HCT116 (cell line): ENCODE measurements at regions of chr17 and their contacts with region 1.

Region 1: GRCh38 chr17:81440876-81441244 is 45.6 kb downstream of the BAHCC1 start:
- DNase-seq: no peak
- ATAC-seq: peak; percentile 83
- H3K4me3 ChIP-seq: no peak overlapping the region
- H3K27ac ChIP-seq: no peak overlapping the region
- H3K4me1 ChIP-seq: peaks cover 11 to 17% of the 10 kb centered on the region in 2 experiments
- H3K27me3 ChIP-seq: no peaks in the 10 kb centered on the region
- CTCF ChIP-seq: peak in 2 of 3 experiments; percentile 94 to 98; a peak in 4 of 6 replicates
- POLR2A ChIP-seq: no peak
- RAD21 ChIP-seq: no peak

Region 2: GRCh38 chr17:81428948-81429774 is 11.7 kb before region 1 on chr17:
- CTCF ChIA-PET with region 1: interaction called, 33 read pairs
- POLR2A ChIA-PET with region 1: interaction called, 3 read pairs
- RAD21 ChIA-PET with region 1: no interaction called
- intact Hi-C with region 1: no loop called
- DNase-seq: no peak
- ATAC-seq: peak; percentile 76
- H3K4me3 ChIP-seq: peak overlapping the region in 1 of 2 experiments; percentile 38; a peak in 1 of 4 replicates
- H3K27ac ChIP-seq: no peak overlapping the region; the same call in 1 of the 2 replicates
- H3K4me1 ChIP-seq: peaks cover 21 to 45% of the 10 kb centered on the region in 2 experiments
- H3K27me3 ChIP-seq: no peaks in the 10 kb centered on the region
- CTCF ChIP-seq: no peak
- POLR2A ChIP-seq: no peak
- RAD21 ChIP-seq: no peak

Region 3: DNA sequence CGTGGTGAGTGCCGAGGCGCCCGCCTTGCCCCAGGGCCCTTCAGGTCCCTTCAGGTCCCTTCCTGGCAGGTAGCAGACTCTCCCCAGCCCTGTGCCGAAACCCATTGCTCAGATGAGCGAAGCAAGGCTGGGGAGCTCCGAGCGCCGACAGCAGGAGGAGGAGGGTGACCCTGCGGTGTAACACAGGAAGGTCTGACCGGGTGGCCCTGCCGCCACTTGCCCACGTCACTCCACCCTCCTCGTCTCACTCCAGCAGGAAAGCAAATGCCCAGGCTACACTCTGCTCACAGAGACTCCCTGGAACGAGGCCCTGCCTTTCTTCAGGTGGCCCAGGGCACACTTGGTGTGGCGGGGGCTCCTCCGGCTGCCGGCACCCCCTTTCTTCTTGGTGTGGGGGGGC is 14.5 kb after region 1 on chr17:
- CTCF ChIA-PET with region 1: no interaction called
- POLR2A ChIA-PET with region 1: no interaction called
- RAD21 ChIA-PET with region 1: no interaction called
- intact Hi-C with region 1: no loop called
- DNase-seq: no peak
- ATAC-seq: no peak
- H3K4me3 ChIP-seq: no peak overlapping the region
- H3K27ac ChIP-seq: no peak overlapping the region; the same call in 1 of the 2 replicates
- H3K4me1 ChIP-seq: no peaks in the 10 kb centered on the region
- H3K27me3 ChIP-seq: no peaks in the 10 kb centered on the region
- CTCF ChIP-seq: no peak
- POLR2A ChIP-seq: no peak
- RAD21 ChIP-seq: no peak

Region 4: DNA sequence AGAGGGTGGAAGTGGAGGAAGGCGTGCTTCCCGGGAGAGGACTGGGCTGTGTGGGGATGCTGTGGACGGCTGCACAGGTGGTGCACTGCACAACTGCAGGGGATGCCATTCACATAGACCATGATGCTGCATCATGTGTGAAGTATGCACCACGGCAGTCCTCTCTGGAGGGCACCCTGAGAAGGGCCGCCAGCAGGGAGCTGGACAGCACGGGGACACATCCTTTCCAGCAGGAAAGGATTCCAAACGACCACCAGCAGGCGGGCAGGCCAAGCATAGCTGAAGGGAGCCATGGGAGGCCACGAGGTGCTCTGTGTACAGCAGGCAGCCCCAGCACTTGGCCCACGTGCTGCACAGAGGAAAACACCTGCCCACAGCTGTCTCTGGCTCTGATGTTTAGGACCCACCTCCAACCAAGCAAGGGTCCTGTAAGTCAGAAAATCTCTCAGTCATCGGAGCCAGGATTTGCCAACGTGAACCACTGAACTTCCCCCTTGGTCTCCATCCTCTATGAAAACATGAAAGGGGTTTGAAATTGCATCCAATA is 61.7 kb after region 1 on chr17:
- CTCF ChIA-PET with region 1: no interaction called
- POLR2A ChIA-PET with region 1: no interaction called
- RAD21 ChIA-PET with region 1: no interaction called
- intact Hi-C with region 1: no loop called
- DNase-seq: no peak
- ATAC-seq: no peak
- H3K4me3 ChIP-seq: no peak overlapping the region
- H3K27ac ChIP-seq: no peak overlapping the region
- H3K4me1 ChIP-seq: peaks cover 0 to 10% of the 10 kb centered on the region in 2 experiments; a peak in 1 of 4 replicates
- H3K27me3 ChIP-seq: no peaks in the 10 kb centered on the region
- CTCF ChIP-seq: no peak
- POLR2A ChIP-seq: no peak
- RAD21 ChIP-seq: no peak